CD8-positive, alpha-beta T cell (primary cell): ENCODE measurements at regions of chr2 and their contacts with region 1.

Region 1: GRCh38 chr2:231604685-231605606 is 12.3 kb downstream of the TEX44 start:
- DNase-seq: peak; percentile 90 to 98 (median 95)
- ATAC-seq: peak; percentile 76
- H3K4me3 ChIP-seq: peak overlapping the region; percentile 37 to 42
- H3K4me3 Mint-ChIP-seq: peak overlapping the region; percentile 69
- H3K27ac ChIP-seq: peak overlapping the region; percentile 46 to 66
- H3K27ac Mint-ChIP-seq: peak overlapping the region; percentile 32
- H3K4me1 ChIP-seq: peaks cover 12% of the 10 kb centered on the region
- H3K4me1 Mint-ChIP-seq: peaks cover 7% of the 10 kb centered on the region
- H3K27me3 ChIP-seq: no peaks in the 10 kb centered on the region
- H3K27me3 Mint-ChIP-seq: peaks cover 2% of the 10 kb centered on the region
- CTCF ChIP-seq: no peak

Region 2: GRCh38 chr2:231463698-231464575 is 141.0 kb before region 1 on chr2 and contains the start of gene NCL:
- CTCF ChIA-PET with region 1: interaction called, 4 read pairs
- POLR2A ChIA-PET with region 1: no interaction called
- intact Hi-C with region 1: loop called in 1 of 2 experiments (anchors 5 kb)
- DNase-seq: peak; percentile 71 to 94 (median 82)
- ATAC-seq: peak; percentile 62
- H3K4me3 ChIP-seq: peak within 1 kb of the TSS; percentile 97
- H3K4me3 Mint-ChIP-seq: peak within 1 kb of the TSS; percentile 96
- H3K27ac ChIP-seq: peak within 1 kb of the TSS; percentile 97 to 98
- H3K27ac Mint-ChIP-seq: peak within 1 kb of the TSS; percentile 100
- H3K4me1 ChIP-seq: peaks cover 36% of the 10 kb centered on the region
- H3K4me1 Mint-ChIP-seq: peaks cover 52% of the 10 kb centered on the region
- H3K27me3 ChIP-seq: no peaks in the 10 kb centered on the region
- H3K27me3 Mint-ChIP-seq: no peaks in the 10 kb centered on the region
- CTCF ChIP-seq: no peak
- total RNA-seq, gene NCL: 390 to 394 TPM

Region 3: DNA sequence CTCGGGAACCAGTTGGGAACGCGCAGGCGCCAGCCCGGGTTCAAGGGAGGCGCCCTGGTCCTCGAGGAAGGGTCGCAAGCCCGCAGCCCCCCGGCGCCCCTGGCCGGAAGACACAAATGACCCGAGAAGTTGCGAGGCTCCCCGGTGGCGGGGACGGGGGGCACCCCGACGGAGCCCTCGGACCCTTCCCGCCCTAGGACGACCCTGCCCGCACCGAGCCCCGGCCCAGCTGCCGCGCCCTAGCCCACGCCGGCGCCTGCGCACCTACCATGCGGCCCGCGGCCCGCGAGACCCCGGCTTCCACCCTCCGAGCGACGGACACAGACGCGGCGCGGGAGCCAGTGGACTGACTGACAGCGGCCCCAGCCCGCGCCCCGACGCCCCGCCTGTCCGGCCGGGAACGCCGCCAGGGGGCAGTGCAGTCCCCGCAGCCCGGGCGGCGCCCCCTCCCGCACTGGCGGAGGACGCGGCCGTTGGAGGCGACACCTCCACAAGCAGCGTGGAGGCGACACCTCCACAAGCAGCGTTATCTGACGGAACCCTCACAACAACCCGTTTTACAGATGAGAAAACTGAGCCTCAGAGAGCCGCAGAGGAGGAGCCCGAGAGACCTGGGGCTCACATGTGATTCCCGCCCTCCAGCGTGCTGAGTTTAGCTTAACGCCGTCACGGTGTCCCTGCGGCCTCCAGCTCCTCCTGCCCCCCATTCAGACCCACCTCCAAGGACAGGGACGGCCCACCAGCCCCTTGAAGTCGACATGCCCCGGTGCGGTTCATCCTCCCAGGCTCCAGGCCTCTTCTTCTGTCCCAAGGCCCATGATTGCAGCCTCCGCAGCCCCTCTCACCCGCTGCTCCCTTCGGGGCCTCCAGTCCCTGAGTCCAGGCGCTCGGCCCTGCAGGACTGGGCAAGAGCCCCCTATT is 74.6 kb before region 1 on chr2 and contains the start of gene NMUR1:
- CTCF ChIA-PET with region 1: no interaction called
- POLR2A ChIA-PET with region 1: no interaction called
- intact Hi-C with region 1: loop called in 1 of 2 experiments (anchors 5 kb)
- DNase-seq: peak; percentile 48 to 89 (median 69)
- ATAC-seq: peak; percentile 92
- H3K4me3 ChIP-seq: peak within 1 kb of the TSS; percentile 33 to 50
- H3K4me3 Mint-ChIP-seq: peak within 1 kb of the TSS; percentile 58
- H3K27ac ChIP-seq: peak within 1 kb of the TSS in 1 of 2 experiments; percentile 67
- H3K27ac Mint-ChIP-seq: peak within 1 kb of the TSS; percentile 32
- H3K4me1 ChIP-seq: peaks cover 33% of the 10 kb centered on the region
- H3K4me1 Mint-ChIP-seq: peaks cover 30% of the 10 kb centered on the region
- H3K27me3 ChIP-seq: peaks cover 0 to 7% of the 10 kb centered on the region in 2 experiments
- H3K27me3 Mint-ChIP-seq: peaks cover 8% of the 10 kb centered on the region
- CTCF ChIP-seq: peak; percentile 89
- total RNA-seq, gene NMUR1: 0.27 to 0.50 TPM

Region 4: GRCh38 chr2:231573698-231574421 is 31.1 kb before region 1 on chr2:
- CTCF ChIA-PET with region 1: no interaction called
- POLR2A ChIA-PET with region 1: no interaction called
- intact Hi-C with region 1: no loop called
- DNase-seq: no peak
- ATAC-seq: no peak
- H3K4me3 ChIP-seq: no peak overlapping the region
- H3K4me3 Mint-ChIP-seq: no peak overlapping the region
- H3K27ac ChIP-seq: no peak overlapping the region
- H3K27ac Mint-ChIP-seq: no peak overlapping the region
- H3K4me1 ChIP-seq: no peaks in the 10 kb centered on the region
- H3K4me1 Mint-ChIP-seq: no peaks in the 10 kb centered on the region
- H3K27me3 ChIP-seq: no peaks in the 10 kb centered on the region
- H3K27me3 Mint-ChIP-seq: peaks cover 3% of the 10 kb centered on the region
- CTCF ChIP-seq: no peak

Region 5: GRCh38 chr2:231662028-231662810 is 57.3 kb after region 1 on chr2:
- CTCF ChIA-PET with region 1: interaction called, 3 read pairs
- POLR2A ChIA-PET with region 1: interaction called, 5 read pairs
- intact Hi-C with region 1: loop called in 1 of 2 experiments (anchors 1 kb)
- DNase-seq: peak; percentile 94 to 99 (median 96)
- ATAC-seq: peak; percentile 91
- H3K4me3 ChIP-seq: peak overlapping the region; percentile 60 to 82
- H3K4me3 Mint-ChIP-seq: peak overlapping the region; percentile 77
- H3K27ac ChIP-seq: peak overlapping the region; percentile 87 to 94
- H3K27ac Mint-ChIP-seq: peak overlapping the region; percentile 97
- H3K4me1 ChIP-seq: peaks cover 16% of the 10 kb centered on the region
- H3K4me1 Mint-ChIP-seq: peaks cover 14% of the 10 kb centered on the region
- H3K27me3 ChIP-seq: no peaks in the 10 kb centered on the region
- H3K27me3 Mint-ChIP-seq: no peaks in the 10 kb centered on the region
- CTCF ChIP-seq: no peak

Region 6: GRCh38 chr2:232315049-232315922 is 710.3 kb after region 1 on chr2:
- CTCF ChIA-PET with region 1: no interaction called
- POLR2A ChIA-PET with region 1: no interaction called
- intact Hi-C with region 1: loop called in 1 of 2 experiments (anchors 10 kb)
- DNase-seq: peak; percentile 45 to 91 (median 79)
- ATAC-seq: peak; percentile 83
- H3K4me3 ChIP-seq: peak overlapping the region; percentile 1 to 36
- H3K4me3 Mint-ChIP-seq: peak overlapping the region; percentile 61
- H3K27ac ChIP-seq: peak overlapping the region; percentile 49 to 80
- H3K27ac Mint-ChIP-seq: peak overlapping the region; percentile 96
- H3K4me1 ChIP-seq: peaks cover 97% of the 10 kb centered on the region
- H3K4me1 Mint-ChIP-seq: peaks cover 95% of the 10 kb centered on the region
- H3K27me3 ChIP-seq: no peaks in the 10 kb centered on the region
- H3K27me3 Mint-ChIP-seq: no peaks in the 10 kb centered on the region
- CTCF ChIP-seq: peak; percentile 48